Calu3 (cell line): ENCODE measurements at regions of chr3 and their contacts with region 1.

Region 1: DNA sequence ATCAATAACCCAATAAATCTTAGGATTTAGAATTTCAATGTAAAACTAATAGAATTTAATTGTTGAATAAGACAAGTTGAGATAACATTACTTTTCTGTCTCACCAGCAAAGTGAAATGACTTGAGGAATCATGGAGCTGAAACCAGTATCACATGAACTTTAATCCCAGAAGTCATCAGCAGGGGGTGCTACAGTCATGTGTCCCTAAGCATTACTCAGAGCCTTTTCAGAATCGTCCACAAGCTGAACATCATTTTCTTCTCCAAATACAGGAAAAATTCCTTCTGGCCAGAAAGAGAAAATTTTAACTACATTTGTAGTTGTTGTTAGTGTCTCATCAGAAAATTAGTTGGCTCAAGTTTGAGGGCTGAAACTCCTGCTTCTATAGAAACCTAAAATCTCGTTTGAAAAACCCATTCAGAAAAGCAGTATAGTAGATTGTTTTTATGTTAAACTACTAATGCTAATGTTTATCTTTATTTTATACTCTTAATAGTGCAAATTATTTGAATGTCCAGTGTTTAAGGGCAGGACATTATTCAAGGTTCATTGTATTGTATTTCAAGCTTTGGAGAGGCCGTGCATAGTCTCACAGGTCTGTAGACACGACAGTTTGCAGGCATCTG is 384.1 kb downstream of the PLOD2 start:
- DNase-seq: peak; percentile 84
- H3K4me3 Mint-ChIP-seq: no peak overlapping the region
- H3K27ac Mint-ChIP-seq: no peak overlapping the region
- H3K4me1 Mint-ChIP-seq: no peaks in the 10 kb centered on the region
- H3K27me3 Mint-ChIP-seq: no peaks in the 10 kb centered on the region
- CTCF ChIP-seq: peak; percentile 83

Region 2: DNA sequence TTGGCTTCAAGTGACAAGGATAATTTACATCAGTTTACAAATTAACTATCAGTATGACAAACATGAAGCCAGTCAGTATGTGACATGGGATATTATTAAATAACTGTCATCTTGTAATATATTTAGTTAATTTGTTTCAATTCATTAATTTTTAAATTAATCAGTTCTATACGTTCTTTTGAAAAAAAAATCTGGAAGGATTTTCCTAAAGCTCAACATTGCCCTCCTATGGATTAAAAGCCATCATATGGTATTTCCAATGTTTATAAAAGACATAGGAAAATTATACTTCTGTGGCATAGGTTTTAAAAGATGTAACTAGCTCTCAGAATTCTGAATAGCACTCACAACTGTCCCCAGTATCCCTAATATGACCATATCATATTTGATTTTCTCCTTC is 249.7 kb after region 1 on chr3:
- CTCF ChIA-PET with region 1: interaction called, 12 read pairs
- intact Hi-C with region 1: loop called (anchors 1 kb)
- DNase-seq: no peak
- H3K4me3 Mint-ChIP-seq: no peak overlapping the region
- H3K27ac Mint-ChIP-seq: no peak overlapping the region
- H3K4me1 Mint-ChIP-seq: no peaks in the 10 kb centered on the region
- H3K27me3 Mint-ChIP-seq: no peaks in the 10 kb centered on the region
- CTCF ChIP-seq: no peak

Region 3: GRCh38 chr3:146148468-146148931 is 371.6 kb after region 1 on chr3:
- CTCF ChIA-PET with region 1: no interaction called
- intact Hi-C with region 1: loop called (anchors 1 kb)
- DNase-seq: no peak
- H3K4me3 Mint-ChIP-seq: no peak overlapping the region
- H3K27ac Mint-ChIP-seq: peak overlapping the region; percentile 39
- H3K4me1 Mint-ChIP-seq: peaks cover 48% of the 10 kb centered on the region
- H3K27me3 Mint-ChIP-seq: no peaks in the 10 kb centered on the region
- CTCF ChIP-seq: no peak

Region 4: DNA sequence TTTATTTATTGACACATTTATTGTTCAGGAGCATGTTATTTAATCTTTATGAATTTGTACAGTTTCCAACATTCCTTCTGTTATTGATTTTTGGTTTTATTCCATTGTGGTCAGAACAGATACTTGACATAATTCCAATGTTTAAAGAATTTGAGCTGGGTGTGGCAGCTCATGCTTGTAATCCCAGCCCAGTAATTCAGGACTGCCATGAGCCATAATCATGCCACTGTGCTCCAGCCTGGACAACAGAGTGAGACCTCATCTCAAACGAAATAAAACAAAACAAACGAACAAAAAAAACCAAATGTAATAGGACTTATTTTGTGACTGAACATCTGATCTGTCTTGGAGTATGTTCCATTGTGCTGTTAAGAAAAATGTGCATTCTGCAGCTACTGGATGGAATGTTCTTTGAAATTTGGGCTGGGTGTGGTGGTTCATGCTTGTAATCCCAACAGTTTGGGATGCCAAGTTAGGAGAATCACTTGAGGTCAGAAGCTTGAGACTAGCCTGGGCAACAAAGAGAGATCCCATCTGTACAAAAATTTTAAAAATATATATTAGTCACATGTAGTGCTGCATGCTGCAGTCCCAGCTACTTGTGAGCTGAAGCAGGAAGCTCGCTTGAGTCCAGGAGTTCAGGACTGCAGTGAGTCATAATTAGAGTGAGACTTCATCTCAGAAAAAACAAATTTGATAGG is 536.7 kb after region 1 on chr3:
- CTCF ChIA-PET with region 1: no interaction called
- intact Hi-C with region 1: loop called (anchors 5 kb)
- DNase-seq: peak; percentile 64
- H3K4me3 Mint-ChIP-seq: peak overlapping the region; percentile 15
- H3K27ac Mint-ChIP-seq: peak overlapping the region; percentile 11
- H3K4me1 Mint-ChIP-seq: peaks cover 54% of the 10 kb centered on the region
- H3K27me3 Mint-ChIP-seq: no peaks in the 10 kb centered on the region
- CTCF ChIP-seq: no peak